Activated CD4-positive, alpha-beta T cell treated with anti-CD3 and anti-CD28 coated beads, Interleukin-2, amount 10 ng/mL, durations not matched to agents 7 days and 5 days (primary cell): ENCODE measurements at regions of chr1 and their contacts with region 1.

Region 1: DNA sequence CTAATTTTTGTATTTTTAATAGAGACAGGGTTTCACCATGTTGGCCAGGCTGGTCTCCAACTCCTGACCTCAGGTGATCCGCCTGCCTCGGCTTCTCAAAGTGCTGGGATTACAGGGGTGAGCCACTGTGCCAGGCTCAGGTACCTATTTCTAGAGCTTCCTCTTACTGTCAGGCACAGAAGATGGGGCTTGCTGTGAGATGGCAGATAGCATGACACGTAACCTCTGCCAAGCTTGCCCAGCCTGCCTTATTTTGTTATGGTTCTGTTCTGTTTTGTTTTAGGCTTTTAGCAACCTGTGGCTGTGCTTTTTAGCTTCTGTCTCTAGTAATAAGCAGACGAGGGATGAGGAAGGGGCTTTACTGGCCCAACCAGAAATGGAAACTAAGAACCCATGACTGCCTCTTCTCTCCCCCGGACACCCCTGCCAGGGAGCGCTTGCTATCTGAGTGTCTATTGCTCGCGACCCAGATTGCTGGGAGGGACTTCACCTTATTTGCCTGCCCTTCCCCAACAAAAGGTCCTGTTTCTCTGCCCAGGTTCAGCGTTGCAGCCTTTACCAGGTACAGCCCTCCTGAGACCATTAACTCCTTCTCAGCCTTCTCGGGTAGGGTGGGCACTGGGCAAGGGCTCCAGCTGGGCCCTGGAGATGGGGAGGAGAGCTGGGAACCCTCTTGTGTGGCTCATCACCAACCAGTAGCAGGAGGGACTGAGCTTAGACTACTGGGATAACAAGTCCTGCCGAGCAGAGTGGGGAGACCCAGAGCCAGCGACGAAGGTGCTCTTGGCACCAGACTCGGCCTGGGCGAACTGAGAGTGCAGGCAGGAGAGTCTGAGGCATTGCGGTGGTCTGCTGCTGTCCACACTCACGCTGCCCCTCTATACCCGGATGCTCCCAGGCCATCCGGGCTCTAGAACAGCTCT is 13.5 kb upstream of the LGR6 start:
- DNase-seq: no peak
- H3K4me3 Mint-ChIP-seq: no peak overlapping the region
- H3K27ac Mint-ChIP-seq: no peak overlapping the region
- H3K4me1 Mint-ChIP-seq: peaks cover 12% of the 10 kb centered on the region
- H3K27me3 Mint-ChIP-seq: peaks cover 3% of the 10 kb centered on the region

Region 2: GRCh38 chr1:202192770-202193613 is 12.9 kb after region 1 on chr1:
- CTCF ChIA-PET with region 1: interaction called, 14 read pairs
- POLR2A ChIA-PET with region 1: no interaction called
- DNase-seq: peak; percentile 50
- H3K4me3 Mint-ChIP-seq: no peak overlapping the region
- H3K27ac Mint-ChIP-seq: no peak overlapping the region
- H3K4me1 Mint-ChIP-seq: peaks cover 4% of the 10 kb centered on the region
- H3K27me3 Mint-ChIP-seq: peaks cover 36% of the 10 kb centered on the region